ENCODE measurements at regions of chr14 and their contacts with region 1.

Region 1: GRCh38 chr14:68283378-68284123 is 464.0 kb downstream of the RAD51B start:
- DNase-seq: peak; percentile 47 to 77 (median 68)
- H3K4me3 ChIP-seq: peak overlapping the region in 1 of 2 donors; percentile 1
- H3K4me3 Mint-ChIP-seq: peak overlapping the region in 7 of 8 donors; percentile 44 to 81 (median 75)
- H3K27ac ChIP-seq: peak overlapping the region; percentile 73
- H3K27ac Mint-ChIP-seq: peak overlapping the region; percentile 94 to 99 (median 95)
- H3K4me1 ChIP-seq: peaks cover 74% of the 10 kb centered on the region
- H3K4me1 Mint-ChIP-seq: peaks cover 60 to 90% (median 73%) of the 10 kb centered on the region in 4 donors
- H3K27me3 ChIP-seq: no peaks in the 10 kb centered on the region
- H3K27me3 Mint-ChIP-seq: no peaks in the 10 kb centered on the region

Region 2: DNA sequence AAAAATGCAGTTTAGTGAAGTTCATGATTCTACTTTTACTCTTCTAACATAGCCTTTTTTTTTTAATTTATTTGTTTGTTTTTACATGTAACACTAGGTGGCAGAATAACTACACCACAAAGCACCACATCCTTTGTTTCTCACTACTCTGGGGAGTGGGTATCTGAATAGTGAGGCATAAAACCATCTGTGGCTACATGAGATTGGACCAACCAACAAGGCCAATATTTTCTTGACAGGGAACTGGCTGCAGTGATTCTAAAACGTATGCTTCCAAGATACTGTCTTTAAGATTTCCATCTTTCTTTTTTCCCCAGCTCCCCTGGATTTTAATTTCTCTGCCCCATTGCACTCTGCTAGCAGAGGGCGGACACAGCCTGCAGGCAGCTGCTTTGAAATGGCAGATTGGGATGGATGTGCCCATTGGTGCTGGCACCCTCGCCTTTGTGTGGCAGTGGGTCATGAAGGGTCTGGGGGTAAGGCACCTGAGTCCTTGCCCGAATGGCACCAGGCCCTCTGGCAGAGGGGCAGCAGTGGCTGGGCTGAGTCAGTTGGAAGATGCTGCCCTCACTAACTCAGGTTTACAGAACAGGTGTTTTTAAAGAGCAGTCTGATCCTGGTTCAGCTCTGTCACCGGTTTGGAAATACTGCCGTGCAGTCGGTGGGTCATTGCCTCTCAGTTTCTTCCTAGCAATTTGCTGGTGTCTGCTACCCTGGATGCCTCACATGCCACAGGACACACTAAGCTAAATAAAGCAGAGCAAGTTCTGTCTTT is 34.9 kb before region 1 on chr14:
- CTCF ChIA-PET with region 1: interaction called, 23 read pairs
- POLR2A ChIA-PET with region 1: interaction called, 38 read pairs
- intact Hi-C with region 1: no loop called
- DNase-seq: peak; percentile 43 to 65 (median 62)
- H3K4me3 ChIP-seq: no peak overlapping the region
- H3K4me3 Mint-ChIP-seq: no peak overlapping the region
- H3K27ac ChIP-seq: no peak overlapping the region
- H3K27ac Mint-ChIP-seq: peak overlapping the region in 3 of 7 donors; percentile 55 to 61 (median 61)
- H3K4me1 ChIP-seq: peaks cover 24% of the 10 kb centered on the region
- H3K4me1 Mint-ChIP-seq: peaks cover 12 to 38% (median 24%) of the 10 kb centered on the region in 4 donors
- H3K27me3 ChIP-seq: no peaks in the 10 kb centered on the region
- H3K27me3 Mint-ChIP-seq: no peaks in the 10 kb centered on the region

Region 3: DNA sequence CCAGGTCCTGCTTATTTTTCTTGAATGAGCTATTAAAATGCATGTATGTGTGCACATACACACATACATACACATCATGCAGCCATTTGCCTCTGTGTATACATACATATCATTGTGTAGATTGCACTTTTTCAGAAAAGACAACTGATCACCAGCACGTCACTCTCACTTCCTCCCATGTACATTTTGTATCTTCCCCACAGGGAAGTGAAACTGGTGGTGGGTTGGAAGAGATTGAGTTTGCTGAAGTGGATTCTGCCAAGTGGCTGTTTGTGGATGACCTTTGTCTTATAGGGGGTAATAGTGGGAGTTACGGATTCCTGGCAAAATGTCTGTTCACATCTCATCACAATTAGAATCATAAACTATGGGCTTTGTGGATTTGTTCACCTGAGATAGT is 15.4 kb before region 1 on chr14:
- CTCF ChIA-PET with region 1: interaction called, 9 read pairs
- POLR2A ChIA-PET with region 1: interaction called, 15 read pairs
- intact Hi-C with region 1: loop called (anchors 2 kb)
- DNase-seq: no peak
- H3K4me3 ChIP-seq: no peak overlapping the region
- H3K4me3 Mint-ChIP-seq: peak overlapping the region in 6 of 8 donors; percentile 18 to 58 (median 48)
- H3K27ac ChIP-seq: no peak overlapping the region
- H3K27ac Mint-ChIP-seq: peak overlapping the region; percentile 61 to 93 (median 85)
- H3K4me1 ChIP-seq: peaks cover 43% of the 10 kb centered on the region
- H3K4me1 Mint-ChIP-seq: peaks cover 29 to 55% (median 37%) of the 10 kb centered on the region in 4 donors
- H3K27me3 ChIP-seq: no peaks in the 10 kb centered on the region
- H3K27me3 Mint-ChIP-seq: no peaks in the 10 kb centered on the region

Region 4: GRCh38 chr14:68369281-68370056 is 85.9 kb after region 1 on chr14:
- CTCF ChIA-PET with region 1: no interaction called
- POLR2A ChIA-PET with region 1: interaction called, 14 read pairs
- intact Hi-C with region 1: loop called (anchors 5 kb)
- DNase-seq: peak in 1 of 5 donors; percentile 7
- H3K4me3 ChIP-seq: peak overlapping the region in 1 of 2 donors; percentile 9
- H3K4me3 Mint-ChIP-seq: peak overlapping the region; percentile 43 to 83 (median 70)
- H3K27ac ChIP-seq: peak overlapping the region; percentile 45
- H3K27ac Mint-ChIP-seq: peak overlapping the region; percentile 71 to 95 (median 86)
- H3K4me1 ChIP-seq: peaks cover 40% of the 10 kb centered on the region
- H3K4me1 Mint-ChIP-seq: peaks cover 26 to 61% (median 47%) of the 10 kb centered on the region in 4 donors
- H3K27me3 ChIP-seq: no peaks in the 10 kb centered on the region
- H3K27me3 Mint-ChIP-seq: no peaks in the 10 kb centered on the region

Region 5: DNA sequence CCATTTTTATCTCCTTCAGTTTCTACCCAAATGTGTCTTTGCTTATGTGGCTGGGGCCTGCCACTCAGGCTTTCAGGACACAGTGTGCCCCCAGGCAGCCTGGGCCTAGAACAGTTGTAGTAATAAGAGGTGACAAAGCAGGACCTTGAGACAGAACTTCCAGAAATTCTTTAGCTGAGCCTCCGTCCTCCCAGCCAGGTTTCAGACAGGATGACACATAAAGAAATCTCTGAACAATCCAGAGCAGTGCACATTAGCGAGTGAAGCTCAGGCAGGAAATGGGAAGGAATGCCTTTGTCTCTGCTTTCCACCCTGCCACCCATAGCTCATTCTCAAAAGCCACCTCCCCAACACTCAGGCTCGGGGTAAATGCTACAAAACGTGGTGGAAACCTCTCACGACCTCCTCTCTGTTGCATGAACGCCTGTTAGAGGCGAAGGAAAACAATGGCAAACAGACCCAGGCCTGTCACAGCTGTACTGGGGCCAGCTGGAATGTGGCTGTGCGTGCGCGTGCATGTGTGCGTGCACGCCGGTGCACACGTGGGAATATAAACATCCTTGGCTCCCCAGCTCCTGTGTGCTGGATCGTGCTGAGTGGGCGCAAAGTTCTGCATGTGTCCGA is 222.6 kb after region 1 on chr14:
- CTCF ChIA-PET with region 1: interaction called, 10 read pairs
- POLR2A ChIA-PET with region 1: interaction called, 54 read pairs
- intact Hi-C with region 1: loop called (anchors 10 kb)
- DNase-seq: peak in 2 of 5 donors; percentile 9 to 39
- H3K4me3 ChIP-seq: peak overlapping the region; percentile 15 to 28
- H3K4me3 Mint-ChIP-seq: peak overlapping the region; percentile 63 to 86 (median 74)
- H3K27ac ChIP-seq: peak overlapping the region; percentile 27
- H3K27ac Mint-ChIP-seq: peak overlapping the region; percentile 60 to 93 (median 89)
- H3K4me1 ChIP-seq: peaks cover 45% of the 10 kb centered on the region
- H3K4me1 Mint-ChIP-seq: peaks cover 40 to 63% (median 52%) of the 10 kb centered on the region in 4 donors
- H3K27me3 ChIP-seq: no peaks in the 10 kb centered on the region
- H3K27me3 Mint-ChIP-seq: no peaks in the 10 kb centered on the region

Region 6: GRCh38 chr14:68637106-68638021 is 353.8 kb after region 1 on chr14:
- CTCF ChIA-PET with region 1: no interaction called
- POLR2A ChIA-PET with region 1: no interaction called
- intact Hi-C with region 1: no loop called
- DNase-seq: no peak
- H3K4me3 ChIP-seq: no peak overlapping the region
- H3K4me3 Mint-ChIP-seq: no peak overlapping the region
- H3K27ac ChIP-seq: no peak overlapping the region
- H3K27ac Mint-ChIP-seq: no peak overlapping the region
- H3K4me1 ChIP-seq: peaks cover 14% of the 10 kb centered on the region
- H3K4me1 Mint-ChIP-seq: no peaks in the 10 kb centered on the region
- H3K27me3 ChIP-seq: no peaks in the 10 kb centered on the region
- H3K27me3 Mint-ChIP-seq: no peaks in the 10 kb centered on the region

Region 7: DNA sequence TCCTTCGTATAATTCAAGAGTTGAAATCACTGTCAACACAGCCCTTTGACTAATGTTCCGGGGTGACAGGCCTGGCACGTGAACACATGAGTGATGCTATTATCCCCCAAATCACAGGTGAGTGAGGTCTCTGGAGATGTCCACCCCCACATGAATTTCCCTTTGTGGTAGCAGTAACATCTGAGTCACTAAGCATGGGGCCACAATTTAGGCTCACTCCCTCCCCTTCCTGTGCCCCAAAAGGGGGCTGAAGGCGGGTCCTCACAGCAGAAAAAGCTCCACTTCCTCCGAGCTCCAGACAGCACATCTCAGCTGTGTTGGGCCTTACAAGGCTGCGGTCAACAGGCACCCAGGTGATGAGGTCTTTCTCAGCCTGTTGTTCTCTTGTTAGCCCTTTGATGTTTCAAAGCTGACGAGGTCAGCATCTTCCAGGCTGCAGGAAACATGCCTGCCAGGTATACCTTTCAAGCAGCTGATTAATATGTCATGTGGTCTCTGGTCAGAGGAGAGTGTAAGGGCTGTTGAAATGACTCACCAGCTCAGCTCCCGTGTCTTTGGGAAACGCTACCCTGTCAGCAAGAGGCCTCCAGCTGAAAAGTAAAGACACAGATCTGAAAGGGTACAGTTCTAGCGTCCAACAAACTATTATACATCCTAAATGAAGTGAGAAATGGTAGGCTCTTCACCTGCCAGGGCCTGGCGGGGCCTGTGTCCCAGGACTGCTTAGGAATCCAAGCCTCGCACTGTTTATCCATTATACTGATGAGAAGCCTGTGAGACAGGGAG is 402.1 kb after region 1 on chr14:
- CTCF ChIA-PET with region 1: interaction called, 10 read pairs
- POLR2A ChIA-PET with region 1: interaction called, 11 read pairs
- intact Hi-C with region 1: loop called (anchors 10 kb)
- DNase-seq: peak; percentile 84 to 97 (median 89)
- H3K4me3 ChIP-seq: peak overlapping the region in 1 of 2 donors; percentile 11
- H3K4me3 Mint-ChIP-seq: peak overlapping the region; percentile 49 to 85 (median 70)
- H3K27ac ChIP-seq: peak overlapping the region; percentile 70
- H3K27ac Mint-ChIP-seq: peak overlapping the region; percentile 93 to 98 (median 97)
- H3K4me1 ChIP-seq: peaks cover 58% of the 10 kb centered on the region
- H3K4me1 Mint-ChIP-seq: peaks cover 48 to 66% (median 60%) of the 10 kb centered on the region in 4 donors
- H3K27me3 ChIP-seq: no peaks in the 10 kb centered on the region
- H3K27me3 Mint-ChIP-seq: no peaks in the 10 kb centered on the region

Region 8: GRCh38 chr14:68780358-68781160 is 497.0 kb after region 1 on chr14:
- CTCF ChIA-PET with region 1: interaction called, 7 read pairs
- POLR2A ChIA-PET with region 1: interaction called, 72 read pairs
- intact Hi-C with region 1: no loop called
- DNase-seq: peak in 4 of 5 donors; percentile 27 to 64 (median 38)
- H3K4me3 ChIP-seq: peak overlapping the region in 1 of 2 donors; percentile 49
- H3K4me3 Mint-ChIP-seq: peak overlapping the region; percentile 79 to 93 (median 85)
- H3K27ac ChIP-seq: peak overlapping the region; percentile 58
- H3K27ac Mint-ChIP-seq: peak overlapping the region; percentile 93 to 99 (median 97)
- H3K4me1 ChIP-seq: peaks cover 91% of the 10 kb centered on the region
- H3K4me1 Mint-ChIP-seq: peaks cover 60 to 98% (median 76%) of the 10 kb centered on the region in 4 donors
- H3K27me3 ChIP-seq: no peaks in the 10 kb centered on the region
- H3K27me3 Mint-ChIP-seq: no peaks in the 10 kb centered on the region